Activated naive CD4-positive, alpha-beta T cell treated with anti-CD3 and anti-CD28 coated beads for 36 hours (primary cell): ENCODE measurements at regions of chr10 and their contacts with region 1.

Region 1: GRCh38 chr10:128150045-128150493 is 23.8 kb upstream of the MKI67 start:
- DNase-seq: peak; percentile 77
- H3K4me3 Mint-ChIP-seq: peak overlapping the region; percentile 65
- H3K27ac Mint-ChIP-seq: no peak overlapping the region
- H3K4me1 Mint-ChIP-seq: peaks cover 18% of the 10 kb centered on the region
- H3K27me3 Mint-ChIP-seq: no peaks in the 10 kb centered on the region

Region 2: GRCh38 chr10:127906548-127907377 is 243.3 kb before region 1 on chr10 and contains the start of gene PTPRE:
- CTCF ChIA-PET with region 1: no interaction called
- intact Hi-C with region 1: loop called (anchors 2 kb)
- DNase-seq: peak; percentile 68
- H3K4me3 Mint-ChIP-seq: peak within 1 kb of the TSS; percentile 36
- H3K27ac Mint-ChIP-seq: no peak within 1 kb of the TSS
- H3K4me1 Mint-ChIP-seq: no peaks in the 10 kb centered on the region
- H3K27me3 Mint-ChIP-seq: peaks cover 20% of the 10 kb centered on the region
- total RNA-seq, gene PTPRE: 13.4 to 16.4 TPM

Region 3: GRCh38 chr10:128035557-128035973 is 114.5 kb before region 1 on chr10:
- CTCF ChIA-PET with region 1: interaction called, 28 read pairs
- intact Hi-C with region 1: loop called (anchors 1 kb)
- DNase-seq: peak; percentile 78
- H3K4me3 Mint-ChIP-seq: no peak overlapping the region
- H3K27ac Mint-ChIP-seq: no peak overlapping the region
- H3K4me1 Mint-ChIP-seq: peaks cover 3% of the 10 kb centered on the region
- H3K27me3 Mint-ChIP-seq: no peaks in the 10 kb centered on the region

Region 4: GRCh38 chr10:128078136-128078969 is 71.7 kb before region 1 on chr10:
- CTCF ChIA-PET with region 1: interaction called, 16 read pairs
- intact Hi-C with region 1: loop called (anchors 1 kb)
- DNase-seq: peak; percentile 60
- H3K4me3 Mint-ChIP-seq: no peak overlapping the region
- H3K27ac Mint-ChIP-seq: no peak overlapping the region
- H3K4me1 Mint-ChIP-seq: no peaks in the 10 kb centered on the region
- H3K27me3 Mint-ChIP-seq: no peaks in the 10 kb centered on the region

Region 5: GRCh38 chr10:128087884-128088709 is 62.0 kb before region 1 on chr10:
- CTCF ChIA-PET with region 1: interaction called, 7 read pairs
- intact Hi-C with region 1: loop called (anchors 2 kb)
- DNase-seq: no peak
- H3K4me3 Mint-ChIP-seq: no peak overlapping the region
- H3K27ac Mint-ChIP-seq: no peak overlapping the region
- H3K4me1 Mint-ChIP-seq: peaks cover 4% of the 10 kb centered on the region
- H3K27me3 Mint-ChIP-seq: no peaks in the 10 kb centered on the region

Region 6: GRCh38 chr10:128125944-128126764 is 23.9 kb before region 1 on chr10 and contains the start of gene MKI67:
- CTCF ChIA-PET with region 1: interaction called, 9 read pairs
- intact Hi-C with region 1: loop called (anchors 1 kb)
- DNase-seq: peak; percentile 95
- H3K4me3 Mint-ChIP-seq: peak within 1 kb of the TSS; percentile 95
- H3K27ac Mint-ChIP-seq: peak within 1 kb of the TSS; percentile 85
- H3K4me1 Mint-ChIP-seq: peaks cover 23% of the 10 kb centered on the region
- H3K27me3 Mint-ChIP-seq: peaks cover 27% of the 10 kb centered on the region
- total RNA-seq, gene MKI67: 266 to 273 TPM